ENCODE measurements at regions of chr16 and their contacts with region 1.

Region 1: GRCh38 chr16:23607726-23608125 is 11.6 kb upstream of the NDUFAB1 start:
- DNase-seq: no peak
- ATAC-seq: no peak
- H3K4me3 ChIP-seq: no peak overlapping the region
- H3K27ac ChIP-seq: no peak overlapping the region
- H3K4me1 ChIP-seq: peaks cover 8% of the 10 kb centered on the region
- H3K27me3 ChIP-seq: no peaks in the 10 kb centered on the region
- CTCF ChIP-seq: no peak

Region 2: DNA sequence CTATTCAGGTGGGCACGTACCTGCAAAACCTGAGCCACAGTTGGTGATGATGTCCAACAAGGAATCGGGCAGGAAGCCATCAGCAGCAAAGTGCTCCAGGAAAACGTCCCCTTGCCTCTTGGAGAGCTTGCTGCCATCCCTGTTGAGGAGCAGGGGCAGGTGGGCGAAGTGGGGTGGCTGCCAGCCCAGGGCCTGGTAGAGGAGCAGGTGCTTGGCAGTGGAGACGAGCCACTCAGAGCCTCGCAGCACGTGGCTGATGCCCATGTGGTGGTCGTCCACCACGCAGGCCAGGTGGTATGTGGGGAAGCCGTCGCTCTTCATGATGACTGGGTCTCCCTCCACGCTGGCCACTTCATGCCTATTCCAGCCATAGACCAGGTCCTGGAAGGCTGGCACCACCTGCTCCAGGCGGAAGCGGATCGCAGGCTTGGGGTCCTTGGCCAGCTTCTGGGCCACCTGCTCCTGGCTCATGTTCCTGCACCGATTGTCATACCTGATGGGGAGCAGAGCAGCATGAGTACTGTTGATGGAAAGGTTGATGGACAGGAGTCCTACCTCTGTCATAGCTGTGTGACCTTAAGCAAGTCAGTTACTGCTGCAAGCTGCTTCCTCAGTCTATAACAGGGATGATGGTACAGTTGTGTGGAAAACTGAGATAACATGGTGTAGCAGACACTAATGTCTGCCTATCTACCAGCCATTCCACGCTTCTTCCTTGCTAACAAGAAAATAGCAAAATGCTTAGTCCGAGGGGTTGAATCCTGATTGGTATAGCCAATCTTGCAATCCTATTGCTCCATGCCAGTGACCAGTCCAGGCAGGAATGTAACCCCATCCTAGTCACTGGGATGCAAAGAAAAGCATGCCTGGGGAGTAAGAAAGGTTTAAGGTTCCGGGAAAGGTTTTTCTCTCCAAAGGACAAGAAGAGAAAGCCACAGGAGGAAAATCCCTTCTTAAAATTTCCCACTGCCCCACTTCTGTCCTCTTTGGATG is 72.6 kb before region 1 on chr16:
- CTCF ChIA-PET with region 1: no interaction called
- POLR2A ChIA-PET with region 1: no interaction called
- in situ Hi-C with region 1: no loop called
- intact Hi-C with region 1: no loop called
- DNase-seq: no peak
- ATAC-seq: no peak
- H3K4me3 ChIP-seq: no peak overlapping the region
- H3K27ac ChIP-seq: no peak overlapping the region
- H3K4me1 ChIP-seq: no peaks in the 10 kb centered on the region
- H3K27me3 ChIP-seq: no peaks in the 10 kb centered on the region
- CTCF ChIP-seq: no peak

Region 3: GRCh38 chr16:23650674-23651416 is 43.1 kb after region 1 on chr16:
- CTCF ChIA-PET with region 1: no interaction called
- POLR2A ChIA-PET with region 1: interaction called, 13 read pairs
- in situ Hi-C with region 1: no loop called
- intact Hi-C with region 1: no loop called
- DNase-seq: no peak
- ATAC-seq: no peak
- H3K4me3 ChIP-seq: no peak overlapping the region
- H3K27ac ChIP-seq: no peak overlapping the region
- H3K4me1 ChIP-seq: no peaks in the 10 kb centered on the region
- H3K27me3 ChIP-seq: no peaks in the 10 kb centered on the region
- CTCF ChIP-seq: no peak